CD4-positive, alpha-beta T cell (primary cell): ENCODE measurements at regions of chr9 and their contacts with region 1.

Region 1: DNA sequence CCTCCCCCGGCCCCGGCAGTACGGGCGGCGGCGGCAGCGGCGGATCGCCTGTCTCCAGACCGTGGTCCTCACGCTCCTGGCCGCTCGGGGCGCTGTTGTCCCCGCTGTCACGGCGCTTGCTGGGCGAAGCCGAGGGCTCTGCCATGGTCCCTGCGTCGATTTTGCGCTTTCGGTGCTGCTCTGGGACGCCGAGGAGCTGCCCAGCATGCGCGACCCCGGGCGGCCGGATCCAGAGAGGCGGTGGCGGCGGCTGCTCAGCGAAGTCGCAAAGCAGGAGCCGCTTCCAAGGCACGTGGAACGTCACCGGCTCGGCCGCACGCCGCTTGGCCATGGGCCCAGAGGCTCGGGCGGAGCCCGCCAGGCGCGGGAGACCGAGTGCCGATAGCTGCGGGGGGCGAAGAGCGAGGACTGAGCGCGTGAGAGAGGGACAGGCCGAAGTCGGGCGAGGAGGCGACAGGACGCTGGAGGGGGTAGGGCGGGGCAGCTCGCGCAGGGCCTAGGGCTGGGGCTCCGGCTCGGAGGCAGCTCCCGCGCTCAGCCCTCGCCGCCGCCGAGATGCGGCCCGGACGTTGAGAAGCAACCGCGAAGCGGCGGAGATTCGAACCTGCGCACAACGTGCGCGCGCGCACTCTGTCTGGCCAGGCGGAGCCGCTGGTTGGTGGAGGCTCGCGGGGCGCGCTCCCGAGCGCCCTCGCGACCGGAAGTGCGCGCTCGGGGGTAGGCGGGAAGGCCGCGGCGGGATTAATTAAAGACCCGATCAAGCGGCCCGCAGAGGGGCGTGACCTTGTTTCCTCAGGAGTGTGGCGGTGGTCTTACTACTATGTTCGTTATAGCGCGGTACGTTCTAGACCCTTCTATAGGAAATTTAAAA is at the start of gene C9orf40:
- DNase-seq: peak; percentile 84 to 95 (median 90)
- ATAC-seq: peak; percentile 88
- H3K4me3 ChIP-seq: peak within 1 kb of the TSS; percentile 92
- H3K4me3 Mint-ChIP-seq: peak within 1 kb of the TSS; percentile 99
- H3K27ac ChIP-seq: peak within 1 kb of the TSS; percentile 81 to 83
- H3K27ac Mint-ChIP-seq: peak within 1 kb of the TSS; percentile 87
- H3K4me1 ChIP-seq: peaks cover 16% of the 10 kb centered on the region
- H3K4me1 Mint-ChIP-seq: peaks cover 28% of the 10 kb centered on the region
- H3K27me3 ChIP-seq: no peaks in the 10 kb centered on the region
- H3K27me3 Mint-ChIP-seq: no peaks in the 10 kb centered on the region
- CTCF ChIP-seq: peak; percentile 80
- total RNA-seq, gene C9orf40: 3.0 TPM

Region 2: GRCh38 chr9:75001719-75002422 is 49.4 kb after region 1 on chr9:
- CTCF ChIA-PET with region 1: interaction called, 12 read pairs
- POLR2A ChIA-PET with region 1: interaction called, 5 read pairs
- intact Hi-C with region 1: loop called (anchors 1 to 5 kb)
- DNase-seq: peak in 4 of 14 experiments; percentile 11 to 87 (median 82)
- ATAC-seq: peak; percentile 96
- H3K4me3 ChIP-seq: no peak overlapping the region
- H3K4me3 Mint-ChIP-seq: no peak overlapping the region
- H3K27ac ChIP-seq: no peak overlapping the region
- H3K27ac Mint-ChIP-seq: no peak overlapping the region
- H3K4me1 ChIP-seq: no peaks in the 10 kb centered on the region
- H3K4me1 Mint-ChIP-seq: peaks cover 5% of the 10 kb centered on the region
- H3K27me3 ChIP-seq: no peaks in the 10 kb centered on the region
- H3K27me3 Mint-ChIP-seq: no peaks in the 10 kb centered on the region
- CTCF ChIP-seq: peak; percentile 92

Region 3: GRCh38 chr9:75019022-75019421 is 66.5 kb after region 1 on chr9:
- CTCF ChIA-PET with region 1: interaction called, 31 read pairs
- POLR2A ChIA-PET with region 1: interaction called, 17 read pairs
- intact Hi-C with region 1: no loop called
- DNase-seq: no peak
- ATAC-seq: no peak
- H3K4me3 ChIP-seq: no peak overlapping the region
- H3K4me3 Mint-ChIP-seq: no peak overlapping the region
- H3K27ac ChIP-seq: no peak overlapping the region
- H3K27ac Mint-ChIP-seq: no peak overlapping the region
- H3K4me1 ChIP-seq: peaks cover 15% of the 10 kb centered on the region
- H3K4me1 Mint-ChIP-seq: peaks cover 49% of the 10 kb centered on the region
- H3K27me3 ChIP-seq: no peaks in the 10 kb centered on the region
- H3K27me3 Mint-ChIP-seq: no peaks in the 10 kb centered on the region
- CTCF ChIP-seq: no peak

Region 4: DNA sequence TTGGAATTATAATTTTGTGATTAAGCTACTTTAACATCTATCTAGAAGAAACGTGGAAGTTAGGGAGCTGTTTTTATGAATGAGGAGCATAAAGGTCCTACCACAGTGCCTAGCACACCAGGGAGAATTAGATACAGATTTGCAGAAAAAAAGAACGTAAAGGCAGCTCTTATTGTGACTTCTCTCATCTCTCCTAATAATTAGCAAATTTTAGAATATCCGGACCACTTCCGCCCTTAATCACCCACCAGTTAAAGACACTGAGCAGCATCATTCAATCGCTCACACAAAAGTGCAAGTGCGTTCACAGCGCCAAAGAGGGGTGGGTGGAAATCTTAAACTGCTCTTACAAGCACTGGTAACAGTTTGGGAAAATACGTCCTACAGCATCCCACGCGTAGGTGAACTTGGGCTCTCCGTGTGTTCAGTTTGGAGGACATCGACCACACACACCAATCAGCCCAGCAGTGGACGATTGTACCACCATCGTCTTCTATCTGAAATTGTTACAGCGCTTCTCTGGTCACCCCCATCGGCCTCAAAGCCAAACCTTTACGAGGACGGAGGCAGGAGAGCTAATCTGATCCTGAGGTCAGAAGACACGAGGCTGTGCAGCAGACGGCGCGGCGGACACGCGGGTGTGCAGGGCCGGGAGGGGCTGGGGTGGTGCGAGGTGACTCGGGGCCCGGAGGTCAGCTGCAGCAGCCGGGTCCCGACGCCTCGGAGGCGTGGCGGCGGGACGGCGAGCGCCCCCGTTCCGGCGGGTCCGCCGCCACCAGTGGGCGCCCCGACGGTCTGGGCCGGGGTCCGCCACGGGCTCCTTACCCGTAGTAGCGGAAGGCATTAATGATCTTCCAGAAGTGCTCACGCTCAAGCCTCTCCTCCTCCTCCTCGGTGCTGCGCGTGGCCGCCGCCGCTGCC is 74.9 kb after region 1 on chr9:
- CTCF ChIA-PET with region 1: interaction called, 31 read pairs
- POLR2A ChIA-PET with region 1: interaction called, 85 read pairs
- intact Hi-C with region 1: loop called (anchors 2 to 5 kb)
- DNase-seq: peak; percentile 2 to 71 (median 27)
- ATAC-seq: peak; percentile 4
- H3K4me3 ChIP-seq: peak overlapping the region; percentile 86
- H3K4me3 Mint-ChIP-seq: peak overlapping the region; percentile 98
- H3K27ac ChIP-seq: peak overlapping the region; percentile 70 to 85
- H3K27ac Mint-ChIP-seq: peak overlapping the region; percentile 92
- H3K4me1 ChIP-seq: peaks cover 24% of the 10 kb centered on the region
- H3K4me1 Mint-ChIP-seq: peaks cover 56% of the 10 kb centered on the region
- H3K27me3 ChIP-seq: no peaks in the 10 kb centered on the region
- H3K27me3 Mint-ChIP-seq: no peaks in the 10 kb centered on the region
- CTCF ChIP-seq: peak; percentile 30

Region 5: DNA sequence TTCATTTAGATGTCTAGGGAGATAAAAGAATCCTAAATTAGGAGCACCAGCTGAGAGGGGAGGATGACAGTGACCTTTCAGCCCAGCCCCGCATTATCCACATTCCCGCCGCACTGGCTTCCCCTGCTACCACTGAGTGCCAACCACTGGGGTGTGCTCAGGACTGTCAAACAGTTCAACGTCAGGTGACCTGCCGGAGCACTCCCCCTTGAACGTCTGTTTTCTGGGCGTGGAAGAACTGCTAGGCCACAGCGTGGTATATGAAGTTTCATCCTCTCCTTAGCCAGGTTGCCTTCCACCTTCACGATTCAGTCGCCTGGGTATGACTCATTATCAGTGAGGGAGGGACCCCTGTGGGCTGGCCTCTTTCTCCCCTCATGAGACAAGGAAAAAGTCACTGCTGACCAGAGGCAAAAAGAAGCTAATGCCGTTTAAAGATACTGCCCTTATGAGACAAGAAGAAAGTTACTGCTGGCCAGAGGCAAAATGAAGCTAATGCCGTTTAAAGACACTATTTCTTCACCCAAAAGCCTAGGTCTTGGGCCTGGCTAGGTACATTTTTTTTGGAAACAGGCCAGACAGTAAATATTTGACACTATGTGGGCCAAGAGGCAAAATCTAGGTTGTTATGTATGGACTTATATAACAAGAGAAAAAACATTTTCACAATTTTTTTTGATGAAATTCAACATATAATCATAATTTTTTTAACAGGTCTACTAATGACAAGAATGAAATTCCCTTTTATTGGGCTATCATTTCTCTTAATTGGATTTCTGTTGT is 130.9 kb after region 1 on chr9:
- CTCF ChIA-PET with region 1: interaction called, 15 read pairs
- POLR2A ChIA-PET with region 1: interaction called, 95 read pairs
- intact Hi-C with region 1: loop called (anchors 1 kb)
- DNase-seq: peak in 9 of 14 experiments; percentile 12 to 78 (median 37)
- ATAC-seq: peak; percentile 27
- H3K4me3 ChIP-seq: no peak overlapping the region
- H3K4me3 Mint-ChIP-seq: peak overlapping the region; percentile 71
- H3K27ac ChIP-seq: peak overlapping the region in 1 of 2 donors; percentile 31
- H3K27ac Mint-ChIP-seq: peak overlapping the region; percentile 88
- H3K4me1 ChIP-seq: peaks cover 40% of the 10 kb centered on the region
- H3K4me1 Mint-ChIP-seq: peaks cover 61% of the 10 kb centered on the region
- H3K27me3 ChIP-seq: no peaks in the 10 kb centered on the region
- H3K27me3 Mint-ChIP-seq: no peaks in the 10 kb centered on the region
- CTCF ChIP-seq: no peak

Region 6: GRCh38 chr9:75148561-75148960 is 196.0 kb after region 1 on chr9:
- CTCF ChIA-PET with region 1: interaction called, 6 read pairs
- POLR2A ChIA-PET with region 1: interaction called, 6 read pairs
- intact Hi-C with region 1: loop called in 1 of 2 experiments (anchors 10 kb)
- DNase-seq: peak in 2 of 14 experiments; percentile 27 to 47
- ATAC-seq: no peak
- H3K4me3 ChIP-seq: no peak overlapping the region
- H3K4me3 Mint-ChIP-seq: peak overlapping the region; percentile 83
- H3K27ac ChIP-seq: peak overlapping the region; percentile 29 to 47
- H3K27ac Mint-ChIP-seq: peak overlapping the region; percentile 92
- H3K4me1 ChIP-seq: peaks cover 55% of the 10 kb centered on the region
- H3K4me1 Mint-ChIP-seq: peaks cover 91% of the 10 kb centered on the region
- H3K27me3 ChIP-seq: no peaks in the 10 kb centered on the region
- H3K27me3 Mint-ChIP-seq: no peaks in the 10 kb centered on the region
- CTCF ChIP-seq: no peak